ENCODE measurements at regions of chr4 and their contacts with region 1.

Region 1: GRCh38 chr4:15882675-15883086 is 55.9 kb downstream of the FGFBP1 start:
- DNase-seq: peak; percentile 9 to 35
- ATAC-seq: peak; percentile 87 to 97
- H3K4me3 ChIP-seq: no peak overlapping the region
- H3K27ac ChIP-seq: no peak overlapping the region
- H3K4me1 ChIP-seq: no peaks in the 10 kb centered on the region
- H3K27me3 ChIP-seq: no peaks in the 10 kb centered on the region
- CTCF ChIP-seq: peak; percentile 72 to 84 (median 77)
- POLR2A ChIP-seq: no peak

Region 2: GRCh38 chr4:15956179-15956850 is 73.6 kb after region 1 on chr4:
- in situ Hi-C with region 1: loop called in 1 of 4 experiments (anchors 10 kb)
- intact Hi-C with region 1: loop called (anchors 1 kb)
- DNase-seq: peak; percentile 59 to 75
- ATAC-seq: peak; percentile 91 to 96
- H3K4me3 ChIP-seq: no peak overlapping the region
- H3K27ac ChIP-seq: no peak overlapping the region
- H3K4me1 ChIP-seq: peaks cover 0 to 3% of the 10 kb centered on the region in 2 donors
- H3K27me3 ChIP-seq: no peaks in the 10 kb centered on the region
- CTCF ChIP-seq: peak; percentile 80 to 95 (median 87)
- POLR2A ChIP-seq: no peak

Region 3: GRCh38 chr4:16001484-16001858 is 118.8 kb after region 1 on chr4:
- in situ Hi-C with region 1: loop called in 3 of 4 experiments (anchors 5 to 10 kb)
- intact Hi-C with region 1: loop called (anchors 1 kb)
- DNase-seq: peak; percentile 20 to 56
- ATAC-seq: peak; percentile 89 to 98
- H3K4me3 ChIP-seq: no peak overlapping the region
- H3K27ac ChIP-seq: no peak overlapping the region
- H3K4me1 ChIP-seq: no peaks in the 10 kb centered on the region
- H3K27me3 ChIP-seq: no peaks in the 10 kb centered on the region
- CTCF ChIP-seq: peak; percentile 53 to 81 (median 73)
- POLR2A ChIP-seq: no peak

Region 4: GRCh38 chr4:16942491-16942890 is 1059.8 kb after region 1 on chr4:
- in situ Hi-C with region 1: no loop called
- intact Hi-C with region 1: no loop called
- DNase-seq: no peak
- ATAC-seq: no peak
- H3K4me3 ChIP-seq: no peak overlapping the region
- H3K27ac ChIP-seq: no peak overlapping the region
- H3K4me1 ChIP-seq: no peaks in the 10 kb centered on the region
- H3K27me3 ChIP-seq: no peaks in the 10 kb centered on the region
- CTCF ChIP-seq: no peak
- POLR2A ChIP-seq: no peak